ENCODE measurements at regions of chr6 and their contacts with region 1.

Region 1: GRCh38 chr6:33288921-33289748 is at the starts of genes PFDN6 and WDR46:
- DNase-seq: peak; percentile 93
- H3K4me3 Mint-ChIP-seq: peak within 1 kb of the TSS; percentile 88
- H3K27ac Mint-ChIP-seq: peak within 1 kb of the TSS; percentile 89
- H3K4me1 Mint-ChIP-seq: peaks cover 24% of the 10 kb centered on the region
- H3K27me3 Mint-ChIP-seq: no peaks in the 10 kb centered on the region
- CTCF ChIP-seq: no peak
- total RNA-seq, gene PFDN6: 54.7 and 67.1 TPM in 2 replicates
- total RNA-seq, gene WDR46: 53.1 and 57.0 TPM in 2 replicates

Region 2: GRCh38 chr6:33105916-33106871 is 182.9 kb before region 1 on chr6:
- CTCF ChIA-PET with region 1: no interaction called
- POLR2A ChIA-PET with region 1: no interaction called
- intact Hi-C with region 1: no loop called
- DNase-seq: no peak
- H3K4me3 Mint-ChIP-seq: no peak overlapping the region
- H3K27ac Mint-ChIP-seq: no peak overlapping the region
- H3K4me1 Mint-ChIP-seq: no peaks in the 10 kb centered on the region
- H3K27me3 Mint-ChIP-seq: peaks cover 94% of the 10 kb centered on the region
- CTCF ChIP-seq: no peak

Region 3: DNA sequence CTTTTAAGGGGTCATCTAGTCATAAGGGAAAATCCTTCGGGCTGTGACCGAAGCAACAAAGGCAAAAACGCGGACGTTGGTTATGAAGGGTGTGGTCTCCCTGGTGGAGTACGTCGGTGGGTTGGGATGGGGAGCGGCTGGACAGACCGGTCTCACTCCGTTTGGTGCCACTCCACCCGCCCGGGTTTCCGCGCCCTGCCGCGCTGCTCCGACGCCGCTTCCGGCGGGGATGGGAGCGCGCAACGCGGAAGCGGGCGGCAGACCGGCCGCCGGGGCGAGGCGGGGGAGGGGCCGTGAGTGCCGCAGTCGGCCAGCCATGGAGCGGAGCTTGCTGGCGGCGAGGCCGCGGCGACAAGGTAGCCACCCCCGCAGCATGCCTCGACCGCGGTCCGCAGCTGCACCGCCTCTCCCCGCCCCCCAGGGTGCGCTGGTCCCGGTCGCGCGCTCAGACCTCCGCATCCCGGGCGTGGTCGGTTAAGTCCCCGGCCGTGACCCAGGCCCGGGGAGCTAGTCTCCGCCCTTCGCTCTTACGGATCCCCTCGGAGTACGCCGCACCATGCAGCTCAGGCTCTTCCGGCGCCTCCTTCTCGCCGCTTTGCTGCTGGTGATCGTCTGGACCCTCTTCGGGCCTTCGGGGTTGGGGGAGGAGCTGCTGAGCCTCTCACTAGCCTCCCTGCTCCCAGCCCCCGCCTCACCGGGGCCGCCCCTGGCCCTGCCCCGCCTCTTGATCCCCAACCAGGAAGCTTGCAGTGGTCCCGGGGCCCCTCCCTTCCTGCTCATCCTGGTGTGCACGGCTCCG is 12.1 kb before region 1 on chr6 and contains the start of gene B3GALT4:
- CTCF ChIA-PET with region 1: interaction called, 18 read pairs
- POLR2A ChIA-PET with region 1: interaction called, 148 read pairs
- intact Hi-C with region 1: no loop called
- DNase-seq: peak; percentile 72
- H3K4me3 Mint-ChIP-seq: peak within 1 kb of the TSS; percentile 99
- H3K27ac Mint-ChIP-seq: peak within 1 kb of the TSS; percentile 80
- H3K4me1 Mint-ChIP-seq: peaks cover 30% of the 10 kb centered on the region
- H3K27me3 Mint-ChIP-seq: no peaks in the 10 kb centered on the region
- CTCF ChIP-seq: peak; percentile 52
- total RNA-seq, gene B3GALT4: 0.37 and 0.58 TPM in 2 replicates

Region 4: DNA sequence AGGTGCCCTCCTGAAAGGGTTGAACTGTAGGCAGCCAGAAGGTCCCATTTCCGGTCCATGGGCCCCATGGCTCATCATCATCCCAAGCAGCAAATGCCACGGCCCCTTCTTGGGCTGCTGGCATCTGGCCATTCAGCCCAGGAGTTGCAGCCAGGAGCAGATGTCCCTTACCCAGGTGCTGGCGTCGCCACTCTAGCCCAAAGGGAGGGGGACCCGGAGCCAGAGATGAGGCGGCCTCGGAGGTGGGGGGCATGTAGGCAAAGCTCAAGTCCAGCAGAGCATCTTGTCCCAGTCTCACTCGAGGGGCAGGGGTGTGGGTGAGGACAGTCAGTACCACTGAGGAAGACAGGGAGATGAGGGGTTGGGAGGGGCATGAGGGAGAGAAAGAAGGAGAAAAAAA is 15.9 kb after region 1 on chr6:
- CTCF ChIA-PET with region 1: interaction called, 10 read pairs
- POLR2A ChIA-PET with region 1: interaction called, 81 read pairs
- intact Hi-C with region 1: no loop called
- DNase-seq: no peak
- H3K4me3 Mint-ChIP-seq: no peak overlapping the region
- H3K27ac Mint-ChIP-seq: peak overlapping the region; percentile 46
- H3K4me1 Mint-ChIP-seq: peaks cover 18% of the 10 kb centered on the region
- H3K27me3 Mint-ChIP-seq: no peaks in the 10 kb centered on the region
- CTCF ChIP-seq: no peak

Region 5: GRCh38 chr6:33317669-33318425 is 28.7 kb after region 1 on chr6 and contains the start of gene ZBTB22:
- CTCF ChIA-PET with region 1: interaction called, 3 read pairs
- POLR2A ChIA-PET with region 1: interaction called, 30 read pairs
- intact Hi-C with region 1: no loop called
- DNase-seq: peak; percentile 100
- H3K4me3 Mint-ChIP-seq: peak within 1 kb of the TSS; percentile 81
- H3K27ac Mint-ChIP-seq: peak within 1 kb of the TSS; percentile 80
- H3K4me1 Mint-ChIP-seq: peaks cover 66% of the 10 kb centered on the region
- H3K27me3 Mint-ChIP-seq: no peaks in the 10 kb centered on the region
- CTCF ChIP-seq: no peak
- total RNA-seq, gene ZBTB22: 12.3 and 15.5 TPM in 2 replicates

Region 6: GRCh38 chr6:33994472-33995308 is 705.6 kb after region 1 on chr6:
- CTCF ChIA-PET with region 1: no interaction called
- POLR2A ChIA-PET with region 1: no interaction called
- intact Hi-C with region 1: no loop called
- DNase-seq: no peak
- H3K4me3 Mint-ChIP-seq: no peak overlapping the region
- H3K27ac Mint-ChIP-seq: no peak overlapping the region
- H3K4me1 Mint-ChIP-seq: no peaks in the 10 kb centered on the region
- H3K27me3 Mint-ChIP-seq: peaks cover 71% of the 10 kb centered on the region
- CTCF ChIP-seq: no peak